ENCODE measurements at regions of chr16 and their contacts with region 1.

Region 1: GRCh38 chr16:3690470-3690928 is 26.8 kb downstream of the TRAP1 start:
- DNase-seq: peak; percentile 95
- H3K4me3 ChIP-seq: peak overlapping the region in 3 of 8 donors; percentile 6 to 52 (median 26)
- H3K27ac ChIP-seq: peak overlapping the region in 3 of 8 donors; percentile 19 to 24 (median 24)
- H3K4me1 ChIP-seq: peaks cover 0 to 21% (median 13%) of the 10 kb centered on the region in 6 donors
- H3K27me3 ChIP-seq: no peaks in the 10 kb centered on the region
- CTCF ChIP-seq: peak; percentile 83 to 99 (median 95)
- POLR2A ChIP-seq: no peak

Region 2: DNA sequence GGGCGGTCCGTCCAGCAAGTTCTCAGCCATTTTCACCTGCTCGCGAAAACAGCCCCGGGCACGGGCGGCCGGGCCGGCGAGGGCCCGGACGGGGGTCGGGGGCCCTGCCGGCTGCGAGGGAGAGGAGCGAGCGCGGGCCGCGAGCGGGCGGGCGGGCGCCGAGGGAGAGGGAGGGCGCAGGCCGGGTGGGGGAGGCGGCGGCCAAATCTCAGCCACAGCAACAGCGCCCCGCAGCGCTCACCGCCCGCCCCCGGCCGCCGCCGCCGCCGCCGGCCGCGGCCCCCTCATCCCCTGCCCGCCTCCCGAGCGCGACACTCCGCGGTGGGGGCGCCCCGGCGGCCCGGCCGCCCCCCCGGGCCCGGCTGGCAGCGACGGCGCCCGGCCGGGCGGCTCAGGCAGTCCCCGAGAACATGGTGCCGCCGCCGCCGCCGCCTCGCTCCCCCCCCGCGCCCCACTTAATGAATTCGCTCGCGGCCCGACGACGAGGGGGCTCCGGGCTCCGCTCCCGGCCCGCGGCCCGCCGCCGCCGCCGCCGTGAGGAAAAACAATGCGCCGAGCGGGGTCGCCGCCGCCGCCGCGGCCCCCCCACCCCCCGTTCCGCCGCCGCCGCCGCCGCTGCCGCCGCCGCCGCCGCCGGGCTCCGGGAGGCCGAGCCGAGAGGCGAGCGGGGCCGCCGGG is 189.5 kb after region 1 on chr16:
- intact Hi-C with region 1: loop called (anchors 10 kb)
- DNase-seq: peak; percentile 95
- H3K4me3 ChIP-seq: peak overlapping the region; percentile 70 to 97 (median 80)
- H3K27ac ChIP-seq: peak overlapping the region in 7 of 8 donors; percentile 79 to 97 (median 89)
- H3K4me1 ChIP-seq: peaks cover 36 to 54% (median 46%) of the 10 kb centered on the region in 6 donors
- H3K27me3 ChIP-seq: peaks cover 0 to 6% (median 0%) of the 10 kb centered on the region in 7 donors
- CTCF ChIP-seq: peak in 2 of 11 experiments; percentile 23 to 36
- POLR2A ChIP-seq: no peak

Measured in spleen (tissue), 13 donors.